ENCODE measurements at regions of chr17 and their contacts with region 1.

Region 1: GRCh38 chr17:38752119-38752929 is at the start of gene PSMB3:
- DNase-seq: peak; percentile 97
- H3K4me3 Mint-ChIP-seq: peak within 1 kb of the TSS; percentile 97
- H3K27ac Mint-ChIP-seq: peak within 1 kb of the TSS; percentile 98
- H3K4me1 Mint-ChIP-seq: peaks cover 35% of the 10 kb centered on the region
- H3K27me3 Mint-ChIP-seq: peaks cover 14% of the 10 kb centered on the region
- total RNA-seq, gene PSMB3: 349 and 366 TPM in 2 replicates

Region 2: DNA sequence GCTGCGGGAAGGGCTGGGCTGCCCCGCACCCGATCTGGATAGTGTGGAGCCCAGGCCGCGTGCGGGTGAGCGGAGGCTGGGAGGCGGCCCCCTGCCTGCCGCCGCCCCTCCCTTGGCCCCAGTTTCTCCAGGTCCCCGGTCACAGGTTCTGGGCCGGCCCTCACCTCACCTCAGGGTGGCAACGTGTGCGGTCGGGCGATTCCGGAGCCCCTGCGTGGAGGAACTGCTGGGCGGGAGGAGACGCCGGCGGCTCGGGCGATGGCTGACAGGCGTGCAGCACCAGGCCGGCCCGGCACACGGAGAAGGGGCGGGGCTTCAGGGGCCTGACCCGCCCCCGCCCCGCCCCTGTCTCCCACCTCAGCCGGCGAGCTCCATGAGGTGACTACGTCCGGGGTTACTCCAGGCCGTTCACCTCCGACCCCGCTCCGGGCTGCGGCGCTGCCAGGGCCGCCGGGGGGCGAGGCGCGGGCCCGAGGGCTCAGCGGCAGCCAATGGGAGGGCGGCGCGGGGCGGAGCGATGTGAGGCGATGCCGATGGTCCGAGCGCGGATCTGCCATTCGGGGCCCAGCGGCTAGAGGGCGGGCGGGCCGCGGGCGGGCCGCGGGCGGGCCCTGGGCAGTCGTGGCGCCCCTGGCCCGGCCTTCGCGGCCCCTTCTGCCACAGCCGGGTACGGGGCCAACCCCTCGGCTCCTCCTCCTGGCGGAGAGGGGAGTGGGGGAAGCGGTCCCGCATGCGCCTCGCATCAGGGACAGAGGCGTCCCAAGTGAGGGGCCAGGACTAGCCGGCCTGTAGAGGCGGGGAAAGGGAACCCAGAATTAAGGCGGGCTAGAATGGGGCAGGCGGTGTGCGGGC is 1393.3 kb before region 1 on chr17:
- intact Hi-C with region 1: loop called (anchors 10 kb)
- DNase-seq: peak; percentile 90
- H3K4me3 Mint-ChIP-seq: peak overlapping the region; percentile 98
- H3K27ac Mint-ChIP-seq: peak overlapping the region; percentile 92
- H3K4me1 Mint-ChIP-seq: peaks cover 32% of the 10 kb centered on the region
- H3K27me3 Mint-ChIP-seq: no peaks in the 10 kb centered on the region

Region 3: DNA sequence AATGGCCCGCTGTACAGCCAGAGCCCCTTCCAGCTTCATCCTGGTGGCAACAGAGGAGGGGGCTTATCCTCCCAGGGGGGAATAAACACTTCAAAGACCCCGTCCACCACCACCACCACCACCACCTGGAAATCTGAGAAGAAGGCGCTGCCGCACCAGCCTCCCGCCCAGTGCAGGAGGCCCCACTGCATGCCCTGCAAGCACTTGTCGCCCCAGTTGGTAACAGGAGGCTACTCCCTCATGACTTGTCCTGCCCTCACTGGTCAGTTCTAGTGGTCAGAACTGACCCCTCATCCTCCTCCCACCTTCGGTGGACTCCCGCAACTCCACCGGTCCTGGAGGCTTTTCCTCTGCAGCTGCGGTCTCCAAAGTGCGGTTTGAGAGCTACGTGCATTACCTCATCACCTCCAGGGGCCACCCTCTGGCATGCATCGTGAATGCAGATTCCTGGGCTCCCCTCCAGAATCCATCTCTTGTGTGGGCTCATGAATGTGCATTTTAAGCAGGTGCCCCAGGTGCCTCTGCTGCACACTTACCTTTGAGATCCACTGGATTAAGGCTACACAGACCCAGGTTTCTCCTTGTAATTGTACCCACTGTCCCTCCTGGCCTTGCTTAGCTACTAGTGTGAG is 218.3 kb before region 1 on chr17:
- intact Hi-C with region 1: no loop called
- DNase-seq: no peak
- H3K4me3 Mint-ChIP-seq: no peak overlapping the region
- H3K27ac Mint-ChIP-seq: no peak overlapping the region
- H3K4me1 Mint-ChIP-seq: no peaks in the 10 kb centered on the region
- H3K27me3 Mint-ChIP-seq: peaks cover 21% of the 10 kb centered on the region

Region 4: GRCh38 chr17:38605888-38606645 is 146.3 kb before region 1 on chr17 and contains the start of gene SRCIN1:
- intact Hi-C with region 1: loop called (anchors 5 kb)
- DNase-seq: peak; percentile 44
- H3K4me3 Mint-ChIP-seq: peak within 1 kb of the TSS; percentile 73
- H3K27ac Mint-ChIP-seq: peak within 1 kb of the TSS; percentile 23
- H3K4me1 Mint-ChIP-seq: peaks cover 5% of the 10 kb centered on the region
- H3K27me3 Mint-ChIP-seq: peaks cover 69% of the 10 kb centered on the region
- total RNA-seq, gene SRCIN1: 0.22 and 0.44 TPM in 2 replicates

Region 5: GRCh38 chr17:38729886-38730525 is 22.3 kb before region 1 on chr17 and contains the start of gene CISD3:
- intact Hi-C with region 1: loop called (anchors 1 kb)
- DNase-seq: peak; percentile 88
- H3K4me3 Mint-ChIP-seq: peak within 1 kb of the TSS; percentile 94
- H3K27ac Mint-ChIP-seq: peak within 1 kb of the TSS; percentile 97
- H3K4me1 Mint-ChIP-seq: peaks cover 82% of the 10 kb centered on the region
- H3K27me3 Mint-ChIP-seq: peaks cover 2% of the 10 kb centered on the region
- total RNA-seq, gene CISD3: 39.2 and 41.4 TPM in 2 replicates

Region 6: GRCh38 chr17:38768417-38768816 is 16.1 kb after region 1 on chr17:
- intact Hi-C with region 1: no loop called
- DNase-seq: no peak
- H3K4me3 Mint-ChIP-seq: no peak overlapping the region
- H3K27ac Mint-ChIP-seq: no peak overlapping the region
- H3K4me1 Mint-ChIP-seq: no peaks in the 10 kb centered on the region
- H3K27me3 Mint-ChIP-seq: no peaks in the 10 kb centered on the region

Region 7: DNA sequence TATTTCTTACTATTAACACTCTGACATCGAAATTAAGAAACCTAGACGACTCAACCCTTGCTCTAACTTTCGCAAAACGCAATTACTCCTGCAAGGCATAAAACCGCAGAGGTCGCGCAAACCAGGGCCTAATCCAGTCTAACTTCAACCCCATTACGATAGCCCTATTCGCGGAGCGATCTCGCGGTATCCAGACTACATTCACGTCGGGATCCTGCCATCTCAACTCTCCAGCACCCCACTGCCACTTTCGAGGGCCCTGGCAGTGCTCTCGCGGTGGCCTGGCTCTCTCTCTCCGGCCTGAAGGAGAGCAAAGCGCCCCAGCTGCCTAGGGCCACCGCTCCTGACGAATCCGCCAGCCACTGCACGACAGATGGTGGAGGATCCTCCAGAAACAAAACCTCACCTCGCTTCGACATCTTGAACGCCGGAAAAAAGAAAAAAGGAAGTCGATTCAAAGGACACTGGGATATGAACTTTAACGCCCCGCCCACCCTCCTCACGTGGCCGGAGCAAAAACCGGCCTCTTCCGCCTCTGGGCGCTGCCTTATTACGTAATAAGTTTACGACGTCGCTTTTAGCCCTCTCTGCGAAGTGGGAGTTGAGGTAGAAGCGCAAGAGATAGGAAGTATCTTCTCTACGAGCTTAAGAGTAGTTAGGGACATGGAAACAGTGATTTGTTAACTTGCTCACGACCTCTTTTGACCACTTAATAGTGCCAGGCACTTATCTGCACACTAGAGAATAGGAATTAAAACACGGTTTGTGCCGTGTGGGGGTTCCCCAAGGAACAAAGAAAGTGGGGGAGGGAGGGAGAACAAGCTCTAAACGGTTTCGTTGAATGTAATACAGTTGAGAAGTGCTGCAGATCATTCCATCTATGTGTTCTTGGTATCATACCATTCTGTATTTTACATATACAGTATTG is 101.2 kb after region 1 on chr17 and contains the start of gene RPL23:
- intact Hi-C with region 1: loop called (anchors 1 kb)
- DNase-seq: peak; percentile 90
- H3K4me3 Mint-ChIP-seq: peak within 1 kb of the TSS; percentile 99
- H3K27ac Mint-ChIP-seq: peak within 1 kb of the TSS; percentile 97
- H3K4me1 Mint-ChIP-seq: peaks cover 44% of the 10 kb centered on the region
- H3K27me3 Mint-ChIP-seq: no peaks in the 10 kb centered on the region
- total RNA-seq, gene RPL23: 1,847 and 1,871 TPM in 2 replicates

Region 8: GRCh38 chr17:39199820-39200069 is 447.4 kb after region 1 on chr17:
- intact Hi-C with region 1: loop called (anchors 5 kb)
- DNase-seq: peak; percentile 84
- H3K4me3 Mint-ChIP-seq: peak overlapping the region; percentile 93
- H3K27ac Mint-ChIP-seq: peak overlapping the region; percentile 98
- H3K4me1 Mint-ChIP-seq: peaks cover 47% of the 10 kb centered on the region
- H3K27me3 Mint-ChIP-seq: no peaks in the 10 kb centered on the region

Region 9: DNA sequence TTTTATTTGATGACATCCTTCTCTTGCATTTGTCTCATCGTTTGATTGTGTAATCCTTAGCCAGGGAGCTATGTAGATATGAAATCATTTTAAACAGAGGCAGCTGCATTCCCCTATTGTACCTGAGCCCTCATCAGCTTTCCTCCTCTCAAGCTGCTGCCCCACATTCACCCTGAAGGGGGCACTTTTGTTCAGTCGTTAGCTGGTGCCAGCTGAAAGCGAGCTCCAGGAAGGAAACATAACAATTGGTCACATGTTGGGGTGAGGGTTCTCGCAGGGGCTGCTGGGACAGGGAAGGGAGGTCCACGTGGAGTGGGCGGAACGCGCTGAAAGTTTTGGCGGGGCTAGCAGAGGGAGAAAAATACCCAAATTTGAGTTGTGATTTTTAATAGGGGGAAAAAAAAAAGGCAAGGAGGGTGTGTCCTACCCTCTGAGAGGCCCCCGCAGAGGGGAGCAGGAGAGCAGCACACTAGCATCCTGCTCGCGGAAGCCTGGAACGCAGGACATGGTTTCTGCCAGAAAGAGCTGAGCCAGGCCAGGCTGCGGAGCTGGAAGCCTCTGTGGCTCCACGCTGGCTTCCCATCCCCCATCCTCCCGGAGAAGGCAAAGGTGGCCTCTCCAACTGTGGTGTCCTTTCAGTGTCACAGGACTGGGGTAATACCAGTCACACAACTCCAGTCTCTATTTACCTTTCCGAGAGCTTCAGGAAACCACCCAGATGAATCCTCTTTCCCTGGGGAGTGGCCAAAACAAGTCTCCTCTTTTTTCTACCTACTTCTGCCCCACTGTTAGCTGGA is 1361.0 kb after region 1 on chr17:
- intact Hi-C with region 1: loop called (anchors 5 kb)
- DNase-seq: peak; percentile 89
- H3K4me3 Mint-ChIP-seq: peak overlapping the region; percentile 82
- H3K27ac Mint-ChIP-seq: peak overlapping the region; percentile 94
- H3K4me1 Mint-ChIP-seq: peaks cover 43% of the 10 kb centered on the region
- H3K27me3 Mint-ChIP-seq: peaks cover under 1% of the 10 kb centered on the region